Natural killer cell (primary cell): ENCODE measurements at regions of chr12 and their contacts with region 1.

Region 1: GRCh38 chr12:6688999-6689882 is at the start of gene ZNF384:
- DNase-seq: peak; percentile 89 to 98
- ATAC-seq: peak; percentile 76 to 93 (median 80)
- H3K4me3 ChIP-seq: peak within 1 kb of the TSS; percentile 63
- H3K4me3 Mint-ChIP-seq: peak within 1 kb of the TSS; percentile 92
- H3K27ac ChIP-seq: peak within 1 kb of the TSS; percentile 95
- H3K27ac Mint-ChIP-seq: peak within 1 kb of the TSS; percentile 93 to 96
- H3K4me1 ChIP-seq: peaks cover 22% of the 10 kb centered on the region
- H3K4me1 Mint-ChIP-seq: peaks cover 43 to 53% of the 10 kb centered on the region in 2 donors
- H3K27me3 ChIP-seq: no peaks in the 10 kb centered on the region
- H3K27me3 Mint-ChIP-seq: peaks cover 2 to 4% of the 10 kb centered on the region in 2 donors
- CTCF ChIP-seq: no peak
- total RNA-seq, gene ZNF384: 95.1 to 101 (median 100) TPM

Region 2: DNA sequence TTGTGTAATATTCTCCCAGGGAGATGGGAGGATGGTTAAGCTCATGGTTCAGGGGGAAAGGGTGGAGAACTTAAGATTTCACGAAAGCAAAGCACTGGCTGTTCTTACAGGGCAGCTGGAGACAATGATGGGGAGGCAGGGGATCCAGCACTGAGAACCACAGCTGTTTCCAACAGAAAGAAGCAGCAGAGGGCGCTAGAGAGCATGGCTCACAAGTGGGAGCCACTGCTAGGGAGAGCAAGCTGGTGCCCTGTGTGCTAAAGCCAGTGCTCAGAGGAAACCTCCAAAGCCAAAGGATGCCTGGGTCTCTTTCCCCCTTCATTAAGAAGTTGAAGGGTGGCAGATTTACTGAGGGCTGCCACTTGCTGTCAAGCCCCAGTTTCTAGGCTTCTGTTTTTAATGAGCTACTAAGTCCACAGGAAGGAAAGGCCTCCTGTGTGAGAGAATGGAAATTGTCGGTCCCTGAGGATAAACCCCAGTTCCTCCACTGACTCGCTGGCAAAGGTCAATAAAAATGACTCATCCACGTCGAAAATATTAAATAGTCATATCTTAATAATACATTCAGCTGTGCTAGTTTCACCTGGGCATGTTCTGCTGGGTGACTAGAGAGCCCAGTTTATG is 943.9 kb before region 1 on chr12:
- intact Hi-C with region 1: no loop called
- DNase-seq: peak; percentile 22 to 69
- ATAC-seq: peak in 2 of 3 donors; percentile 26 to 78
- H3K4me3 ChIP-seq: no peak overlapping the region
- H3K4me3 Mint-ChIP-seq: no peak overlapping the region
- H3K27ac ChIP-seq: no peak overlapping the region
- H3K27ac Mint-ChIP-seq: no peak overlapping the region
- H3K4me1 ChIP-seq: no peaks in the 10 kb centered on the region
- H3K4me1 Mint-ChIP-seq: no peaks in the 10 kb centered on the region
- H3K27me3 ChIP-seq: no peaks in the 10 kb centered on the region
- H3K27me3 Mint-ChIP-seq: peaks cover 3 to 13% of the 10 kb centered on the region in 2 donors
- CTCF ChIP-seq: peak; percentile 63

Region 3: GRCh38 chr12:6547987-6548386 is 141.3 kb before region 1 on chr12:
- intact Hi-C with region 1: no loop called
- DNase-seq: no peak
- ATAC-seq: no peak
- H3K4me3 ChIP-seq: no peak overlapping the region
- H3K4me3 Mint-ChIP-seq: no peak overlapping the region
- H3K27ac ChIP-seq: no peak overlapping the region
- H3K27ac Mint-ChIP-seq: peak overlapping the region in 1 of 2 donors; percentile 29
- H3K4me1 ChIP-seq: peaks cover 23% of the 10 kb centered on the region
- H3K4me1 Mint-ChIP-seq: peaks cover 24 to 32% of the 10 kb centered on the region in 2 donors
- H3K27me3 ChIP-seq: no peaks in the 10 kb centered on the region
- H3K27me3 Mint-ChIP-seq: no peaks in the 10 kb centered on the region
- CTCF ChIP-seq: no peak

Region 4: GRCh38 chr12:6563448-6564050 is 125.7 kb before region 1 on chr12:
- intact Hi-C with region 1: loop called (anchors 5 kb)
- DNase-seq: peak; percentile 60 to 84
- ATAC-seq: peak; percentile 21 to 49 (median 25)
- H3K4me3 ChIP-seq: no peak overlapping the region
- H3K4me3 Mint-ChIP-seq: no peak overlapping the region
- H3K27ac ChIP-seq: no peak overlapping the region
- H3K27ac Mint-ChIP-seq: peak overlapping the region; percentile 19 to 50
- H3K4me1 ChIP-seq: peaks cover 8% of the 10 kb centered on the region
- H3K4me1 Mint-ChIP-seq: peaks cover 34% of the 10 kb centered on the region in 2 donors
- H3K27me3 ChIP-seq: no peaks in the 10 kb centered on the region
- H3K27me3 Mint-ChIP-seq: no peaks in the 10 kb centered on the region
- CTCF ChIP-seq: peak; percentile 86

Region 5: GRCh38 chr12:6613776-6614512 is 75.3 kb before region 1 on chr12:
- intact Hi-C with region 1: loop called (anchors 1 kb)
- DNase-seq: peak; percentile 72 to 82
- ATAC-seq: peak; percentile 73 to 83 (median 81)
- H3K4me3 ChIP-seq: peak overlapping the region; percentile 11
- H3K4me3 Mint-ChIP-seq: peak overlapping the region; percentile 72
- H3K27ac ChIP-seq: peak overlapping the region; percentile 89
- H3K27ac Mint-ChIP-seq: peak overlapping the region; percentile 90 to 94
- H3K4me1 ChIP-seq: peaks cover 39% of the 10 kb centered on the region
- H3K4me1 Mint-ChIP-seq: peaks cover 22 to 52% of the 10 kb centered on the region in 2 donors
- H3K27me3 ChIP-seq: no peaks in the 10 kb centered on the region
- H3K27me3 Mint-ChIP-seq: no peaks in the 10 kb centered on the region
- CTCF ChIP-seq: no peak

Region 6: DNA sequence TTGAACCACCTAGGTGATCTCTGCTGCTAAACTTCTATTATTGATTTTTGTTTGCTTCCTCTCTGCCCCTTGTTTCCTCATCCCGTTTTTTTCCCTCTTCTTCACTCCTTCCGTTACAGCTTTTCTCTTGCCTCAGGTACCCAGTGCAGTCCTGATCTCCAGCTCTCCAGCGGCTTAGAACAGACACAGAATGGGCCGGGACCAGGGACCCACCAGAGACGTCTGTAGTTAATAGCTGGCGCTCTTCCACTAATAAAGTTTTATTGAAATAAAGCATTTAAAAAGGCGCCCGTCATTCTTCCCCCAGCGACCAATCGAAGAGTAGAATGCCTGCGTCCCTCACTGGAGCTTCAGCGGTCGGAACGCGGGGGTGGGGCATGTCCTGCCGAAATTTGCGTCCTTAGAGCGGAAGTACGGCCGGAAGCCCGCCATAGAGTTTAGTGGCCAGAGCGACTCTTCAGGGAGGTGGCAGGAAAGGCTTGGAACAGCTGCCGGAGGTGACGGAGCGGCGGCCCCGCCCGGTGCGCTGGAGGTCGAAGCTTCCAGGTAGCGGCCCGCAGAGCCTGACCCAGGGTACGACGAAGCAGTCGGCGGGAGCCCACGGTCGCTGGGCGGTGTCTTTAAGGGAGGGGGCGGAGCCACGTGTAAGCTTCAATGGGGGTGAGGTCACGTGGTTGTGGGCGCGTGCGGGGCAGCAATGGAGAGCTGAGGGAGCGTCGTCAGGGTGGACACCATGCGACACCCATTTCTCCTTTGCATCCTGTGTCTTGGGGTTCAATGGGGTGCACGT is 34.6 kb after region 1 on chr12 and contains the start of gene COPS7A:
- intact Hi-C with region 1: loop called (anchors 1 kb)
- DNase-seq: peak; percentile 92 to 96
- ATAC-seq: peak; percentile 90 to 97 (median 93)
- H3K4me3 ChIP-seq: peak within 1 kb of the TSS; percentile 68
- H3K4me3 Mint-ChIP-seq: peak within 1 kb of the TSS; percentile 94
- H3K27ac ChIP-seq: peak within 1 kb of the TSS; percentile 84
- H3K27ac Mint-ChIP-seq: peak within 1 kb of the TSS; percentile 77 to 93
- H3K4me1 ChIP-seq: peaks cover 12% of the 10 kb centered on the region
- H3K4me1 Mint-ChIP-seq: peaks cover 20 to 22% of the 10 kb centered on the region in 2 donors
- H3K27me3 ChIP-seq: no peaks in the 10 kb centered on the region
- H3K27me3 Mint-ChIP-seq: peaks cover 0 to 3% of the 10 kb centered on the region in 2 donors
- CTCF ChIP-seq: no peak
- total RNA-seq, gene COPS7A: 23.5 to 29.8 (median 28.9) TPM